Activated CD4-positive, alpha-beta memory T cell treated with anti-CD3 and anti-CD28 coated beads, Interleukin-2, amount 10 ng/mL, durations not matched to agents 7 days and 5 days (primary cell): ENCODE measurements at regions of chr1 and their contacts with region 1.

Region 1: DNA sequence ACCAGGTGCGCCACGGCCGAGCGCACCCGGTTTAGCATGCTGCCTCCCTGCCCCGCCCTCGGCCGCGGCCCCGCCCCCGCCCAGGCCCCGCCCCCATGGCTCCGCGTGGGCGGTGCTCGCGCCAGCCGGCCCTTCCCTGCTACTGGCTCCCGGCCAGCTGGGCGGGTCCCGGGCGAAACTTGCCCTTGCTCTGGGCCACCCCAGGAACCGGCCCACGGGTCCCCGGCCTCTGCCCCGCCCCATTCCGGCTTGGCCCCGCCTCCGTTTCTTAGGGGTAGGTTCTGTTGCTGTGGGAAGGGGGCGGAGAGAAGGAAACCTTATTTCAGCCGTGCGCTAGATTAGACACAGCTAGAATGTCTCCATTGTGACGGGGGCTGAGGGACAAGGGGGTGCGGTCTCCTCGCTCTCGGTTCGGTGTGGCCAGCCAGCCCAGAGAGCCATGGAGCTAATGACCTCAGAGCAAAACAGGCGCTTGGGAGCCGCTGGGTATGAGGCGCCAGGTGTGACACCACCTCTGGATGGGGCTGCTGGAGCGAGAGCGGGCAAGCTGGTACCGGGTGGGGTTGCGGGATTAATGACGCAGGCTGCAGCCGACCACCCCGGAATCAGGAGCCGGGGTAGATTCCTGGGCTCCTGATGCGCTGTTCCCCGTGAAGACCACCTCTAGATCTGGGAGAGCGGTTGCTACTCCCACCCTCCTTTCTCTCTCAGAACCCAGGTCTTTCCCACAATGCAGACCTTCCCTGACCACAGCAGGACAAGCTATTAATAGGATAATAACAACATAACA is at the start of gene PPM1J:
- DNase-seq: peak; percentile 99
- H3K4me3 Mint-ChIP-seq: peak within 1 kb of the TSS; percentile 81
- H3K27ac Mint-ChIP-seq: no peak within 1 kb of the TSS
- H3K4me1 Mint-ChIP-seq: peaks cover 32% of the 10 kb centered on the region
- H3K27me3 Mint-ChIP-seq: peaks cover 53% of the 10 kb centered on the region
- total RNA-seq, gene PPM1J: not detected

Region 2: DNA sequence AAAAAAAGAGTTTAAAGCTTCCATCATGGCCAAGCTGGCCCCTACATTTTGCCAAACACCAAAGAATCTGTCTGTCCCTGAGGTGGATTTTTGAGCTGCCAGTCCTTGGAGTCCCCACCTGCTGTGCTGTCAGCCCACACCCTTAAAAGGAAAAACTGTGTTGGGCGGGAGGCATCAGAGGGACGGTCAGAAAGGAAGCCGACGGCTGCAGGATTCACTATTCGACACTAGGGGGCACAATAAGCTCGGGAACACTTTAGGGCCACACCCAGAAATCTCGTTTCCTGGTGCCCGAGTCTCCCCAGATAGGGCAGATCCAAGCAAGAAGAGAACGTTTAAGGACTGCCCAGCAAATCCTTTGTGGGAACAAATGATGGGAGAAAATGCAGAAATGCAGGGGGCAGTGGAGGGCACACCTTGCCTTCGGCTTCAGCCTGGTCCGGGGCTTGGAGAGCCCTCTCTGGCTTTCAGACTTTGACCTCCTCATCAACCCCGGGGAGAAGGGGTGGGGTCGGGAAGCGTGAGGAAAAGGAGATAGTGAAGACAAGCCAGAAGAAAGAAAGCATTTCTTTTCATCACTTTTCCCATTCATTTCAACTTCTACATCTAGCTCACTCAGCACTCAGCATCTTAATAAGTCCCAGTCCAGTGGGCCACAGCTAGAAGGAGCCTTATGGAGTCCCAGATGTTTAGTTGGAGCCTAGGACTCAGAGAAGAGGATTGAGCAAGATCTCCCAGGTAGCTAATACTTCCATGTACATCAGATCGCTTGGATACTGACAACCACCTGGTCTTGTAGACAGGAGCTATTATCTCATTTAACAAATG is 324.5 kb before region 1 on chr1:
- CTCF ChIA-PET with region 1: interaction called, 14 read pairs
- POLR2A ChIA-PET with region 1: interaction called, 3 read pairs
- DNase-seq: peak; percentile 86
- H3K4me3 Mint-ChIP-seq: peak overlapping the region; percentile 62
- H3K27ac Mint-ChIP-seq: peak overlapping the region; percentile 6
- H3K4me1 Mint-ChIP-seq: peaks cover 42% of the 10 kb centered on the region
- H3K27me3 Mint-ChIP-seq: peaks cover 7% of the 10 kb centered on the region

Region 3: DNA sequence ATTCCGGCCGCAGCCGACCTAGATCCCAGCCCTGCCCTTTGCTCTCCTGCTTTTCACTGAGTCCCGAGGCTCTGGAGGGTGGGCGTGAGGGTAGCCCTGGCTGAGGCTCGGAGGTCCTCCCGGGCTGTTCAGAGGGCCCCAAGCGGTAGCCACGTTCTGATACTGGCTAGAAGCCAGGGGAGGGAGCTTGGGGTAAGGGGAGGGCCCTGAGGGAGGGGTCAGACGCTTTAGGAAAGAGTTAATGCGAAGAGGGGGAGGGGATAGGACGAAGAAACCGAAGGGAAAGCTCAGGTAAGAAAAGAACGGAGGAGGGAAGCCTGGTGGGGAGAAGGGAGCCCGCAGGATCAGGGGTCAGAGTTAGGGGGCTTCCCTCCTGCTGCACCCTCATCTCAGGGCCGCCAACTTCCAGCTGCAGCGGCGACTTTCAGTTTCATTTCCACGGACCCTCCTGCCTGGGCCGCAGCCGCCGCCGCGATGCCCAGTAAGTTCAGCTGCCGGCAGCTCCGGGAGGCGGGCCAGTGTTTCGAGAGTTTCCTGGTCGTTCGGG is 40.9 kb before region 1 on chr1 and contains the start of gene MOV10:
- CTCF ChIA-PET with region 1: interaction called, 22 read pairs
- POLR2A ChIA-PET with region 1: interaction called, 51 read pairs
- DNase-seq: peak; percentile 71
- H3K4me3 Mint-ChIP-seq: peak within 1 kb of the TSS; percentile 96
- H3K27ac Mint-ChIP-seq: peak within 1 kb of the TSS; percentile 91
- H3K4me1 Mint-ChIP-seq: peaks cover 43% of the 10 kb centered on the region
- H3K27me3 Mint-ChIP-seq: no peaks in the 10 kb centered on the region
- total RNA-seq, gene MOV10: 100 to 102 TPM

Region 4: DNA sequence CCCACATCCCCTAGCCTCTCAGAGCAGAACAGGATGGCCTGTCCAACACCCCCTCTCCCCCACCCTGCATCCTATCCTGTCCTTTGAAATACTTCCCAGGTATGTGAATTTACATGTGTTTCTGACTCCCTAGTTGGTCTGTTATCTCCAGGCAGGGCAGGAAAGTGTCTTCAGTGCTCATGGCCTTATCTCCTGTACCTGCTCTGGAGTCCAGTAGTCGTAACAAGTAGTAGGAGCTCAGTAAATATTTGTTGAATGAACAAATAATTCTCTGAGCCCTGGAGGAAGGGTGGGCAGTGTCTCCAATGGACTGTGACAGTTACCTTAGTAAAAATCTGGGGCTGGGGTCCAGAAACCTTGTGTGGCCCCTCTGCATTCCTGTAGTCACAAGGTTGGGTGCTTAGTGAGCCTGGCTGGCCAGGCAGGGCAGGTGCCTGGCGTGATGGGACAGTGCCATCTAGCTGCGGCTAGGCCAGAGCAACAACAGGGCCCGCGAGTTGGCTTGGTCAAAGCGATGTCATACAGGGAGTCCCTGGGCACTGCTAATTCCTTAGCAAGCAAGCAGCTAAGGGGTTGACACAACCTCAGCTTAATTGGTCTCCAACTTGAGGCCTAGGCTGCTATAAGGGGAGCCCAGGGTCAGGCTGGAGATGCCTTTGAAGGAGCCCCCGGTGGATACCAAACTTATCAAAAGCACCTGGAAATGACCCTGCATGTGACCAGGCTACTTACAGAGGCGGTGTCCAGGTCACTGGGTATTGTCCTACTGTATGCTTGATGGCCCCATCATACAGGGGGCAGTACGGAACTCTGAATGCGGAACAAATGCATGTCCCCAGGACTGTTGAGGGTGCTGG is 88.7 kb after region 1 on chr1:
- CTCF ChIA-PET with region 1: interaction called, 96 read pairs
- POLR2A ChIA-PET with region 1: no interaction called
- DNase-seq: peak; percentile 68
- H3K4me3 Mint-ChIP-seq: no peak overlapping the region
- H3K27ac Mint-ChIP-seq: no peak overlapping the region
- H3K4me1 Mint-ChIP-seq: no peaks in the 10 kb centered on the region
- H3K27me3 Mint-ChIP-seq: peaks cover 6% of the 10 kb centered on the region

Region 5: GRCh38 chr1:112955781-112956543 is 240.5 kb after region 1 on chr1 and contains the start of gene SLC16A1:
- CTCF ChIA-PET with region 1: interaction called, 10 read pairs
- POLR2A ChIA-PET with region 1: no interaction called
- DNase-seq: peak; percentile 90
- H3K4me3 Mint-ChIP-seq: peak within 1 kb of the TSS; percentile 81
- H3K27ac Mint-ChIP-seq: peak within 1 kb of the TSS; percentile 99
- H3K4me1 Mint-ChIP-seq: peaks cover 56% of the 10 kb centered on the region
- H3K27me3 Mint-ChIP-seq: no peaks in the 10 kb centered on the region
- total RNA-seq, gene SLC16A1: 59.0 to 61.4 TPM